ENCODE measurements at regions of chr9 and their contacts with region 1.

Region 1: DNA sequence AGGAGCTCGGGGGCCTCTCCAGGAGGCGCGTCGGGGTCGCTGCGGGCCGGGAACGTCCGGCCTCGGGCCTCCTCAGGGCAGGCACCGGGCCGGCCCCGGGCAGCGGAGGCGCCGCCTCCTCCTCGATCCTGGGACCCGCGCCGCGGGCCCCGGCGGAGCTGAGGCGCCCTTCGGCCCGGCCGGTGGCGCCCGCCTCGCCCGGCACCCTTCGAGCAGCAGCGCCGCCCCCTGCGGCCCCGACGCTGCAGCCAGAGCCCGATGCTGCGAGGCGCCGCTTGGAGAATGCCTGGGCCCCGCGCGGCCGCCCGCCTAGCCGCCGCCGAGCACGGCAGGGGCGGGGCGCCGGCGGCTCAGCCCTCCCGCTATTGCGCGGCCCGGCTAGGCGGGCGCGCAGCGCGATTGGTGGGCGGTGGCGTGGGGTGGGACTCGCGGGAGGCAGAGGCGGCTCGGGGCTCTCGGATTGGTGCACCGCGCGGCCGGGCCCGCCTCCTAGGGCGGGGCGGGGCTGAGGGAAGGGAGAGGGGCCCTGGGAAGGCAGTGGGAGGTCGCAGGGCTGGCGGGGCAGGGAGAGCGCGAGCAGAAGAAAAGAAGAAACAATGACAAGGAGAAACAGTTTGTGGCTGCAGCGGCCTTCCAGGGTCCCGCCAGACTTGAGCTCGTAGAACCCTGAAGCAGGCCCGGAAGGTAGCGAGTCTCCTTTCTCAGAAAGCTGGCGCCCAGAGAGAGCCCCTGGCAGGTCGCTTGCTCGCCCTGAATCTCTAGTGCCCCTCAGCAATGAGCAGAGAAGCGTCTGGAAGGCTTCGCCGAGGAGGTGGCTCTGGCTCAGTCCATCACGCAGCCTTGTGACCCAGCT is at the start of gene EEIG1:
- DNase-seq: peak; percentile 92 to 100 (median 97)

Region 2: GRCh38 chr9:127838375-127839078 is 142.4 kb before region 1 on chr9:
- intact Hi-C with region 1: no loop called
- DNase-seq: peak in 1 of 10 donors; percentile 88

Region 3: GRCh38 chr9:127963359-127964064 is 17.4 kb before region 1 on chr9:
- intact Hi-C with region 1: loop called (anchors 2 kb)
- DNase-seq: peak in 4 of 10 donors; percentile 7 to 56 (median 17)

Region 4: GRCh38 chr9:128034821-128035764 is 54.2 kb after region 1 on chr9:
- intact Hi-C with region 1: loop called (anchors 5 kb)
- DNase-seq: peak in 9 of 10 donors; percentile 20 to 94 (median 63)

Region 5: DNA sequence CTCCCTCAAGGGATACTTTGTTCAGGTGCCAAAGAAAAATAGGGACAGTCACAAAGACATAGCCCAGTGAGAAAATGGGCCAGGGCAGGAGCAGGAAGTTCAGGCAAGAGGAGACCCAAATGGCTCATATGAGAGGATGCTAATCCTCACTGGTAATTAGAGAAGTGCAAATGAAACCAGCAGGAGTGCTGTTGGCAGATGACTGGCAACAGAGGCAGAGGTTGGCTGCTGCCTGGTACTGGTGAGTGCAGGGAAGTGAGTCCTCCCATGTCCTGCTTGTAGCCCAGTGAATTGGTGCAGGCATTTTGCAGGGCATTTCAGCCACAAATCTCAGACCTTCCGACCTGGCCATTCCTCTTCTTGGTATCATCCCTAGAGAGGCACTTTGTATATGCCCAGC is 498.3 kb after region 1 on chr9:
- intact Hi-C with region 1: no loop called
- DNase-seq: no peak